ENCODE measurements at regions of chr10 and their contacts with region 1.

Region 1: GRCh38 chr10:70221030-70221429 is 12.2 kb downstream of the PPA1 start:
- DNase-seq: no peak
- ATAC-seq: no peak
- H3K4me3 Mint-ChIP-seq: peak overlapping the region in 2 of 10 donors; percentile 12 to 53
- H3K27ac Mint-ChIP-seq: peak overlapping the region in 2 of 10 donors; percentile 73 to 80
- H3K4me1 Mint-ChIP-seq: peaks cover 8 to 18% (median 14%) of the 10 kb centered on the region in 4 donors
- H3K27me3 Mint-ChIP-seq: no peaks in the 10 kb centered on the region

Region 2: DNA sequence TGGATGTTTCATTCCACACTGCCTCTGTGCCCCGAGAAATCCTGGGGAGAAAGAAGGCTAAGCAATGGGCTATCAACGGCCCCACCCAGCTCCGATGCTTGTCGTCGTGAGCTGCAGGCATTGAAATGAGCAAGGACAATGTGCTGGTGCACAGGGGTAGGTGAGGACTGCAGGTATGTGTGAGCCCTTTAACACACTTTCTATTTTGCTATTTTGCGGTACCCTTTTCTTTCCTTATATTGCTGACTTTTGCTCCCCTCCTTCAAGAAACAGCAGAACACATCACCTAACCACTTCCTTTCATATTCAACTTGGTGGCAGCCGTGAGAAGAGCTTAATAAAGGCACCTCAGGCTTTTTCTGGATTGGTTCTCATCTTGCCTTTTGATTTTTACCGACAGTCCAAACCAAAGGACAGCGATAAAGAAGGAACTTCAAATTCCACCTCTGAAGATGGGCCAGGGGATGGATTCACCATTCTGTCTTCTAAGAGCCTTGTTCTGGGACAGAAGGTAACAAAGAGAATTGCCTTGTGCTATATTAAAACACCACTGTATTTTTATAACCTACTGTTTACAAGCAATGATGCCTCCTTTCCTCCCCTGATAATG is 127.6 kb before region 1 on chr10:
- POLR2A ChIA-PET with region 1: no interaction called
- DNase-seq: peak in 4 of 10 donors; percentile 19 to 64 (median 48)
- ATAC-seq: peak; percentile 69 to 70
- H3K4me3 Mint-ChIP-seq: peak overlapping the region; percentile 78 to 97 (median 94)
- H3K27ac Mint-ChIP-seq: peak overlapping the region; percentile 95 to 99 (median 98)
- H3K4me1 Mint-ChIP-seq: peaks cover 20 to 69% (median 58%) of the 10 kb centered on the region in 4 donors
- H3K27me3 Mint-ChIP-seq: no peaks in the 10 kb centered on the region

Region 3: DNA sequence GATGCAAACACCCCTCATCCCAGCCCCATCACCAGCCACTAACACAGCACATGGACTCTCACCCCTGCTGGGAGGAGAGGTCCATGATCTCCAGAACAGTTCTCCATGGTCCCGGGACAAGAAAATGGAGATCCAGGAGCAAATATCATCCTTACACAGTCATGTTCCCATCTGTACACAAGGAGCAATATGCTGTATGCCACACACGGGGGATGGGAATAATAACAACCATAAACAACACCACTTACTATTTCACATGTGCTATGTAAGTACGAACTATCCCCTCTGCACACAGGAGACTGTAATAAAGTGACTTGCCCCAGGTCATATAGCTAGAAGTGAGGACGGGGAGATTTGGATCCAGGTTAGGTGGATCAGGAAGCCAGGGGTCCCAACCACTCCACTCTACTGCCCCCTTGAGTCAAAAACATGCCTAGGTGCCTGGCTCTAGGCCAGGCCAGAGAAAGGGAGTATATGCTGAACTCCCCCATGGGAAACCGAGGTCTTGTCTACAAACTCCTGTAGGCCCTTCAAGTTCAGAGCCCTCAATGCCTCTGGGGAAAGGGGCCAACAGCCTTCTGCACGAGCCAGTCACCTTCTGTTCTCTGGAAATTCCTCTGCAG is 127.3 kb after region 1 on chr10:
- POLR2A ChIA-PET with region 1: no interaction called
- DNase-seq: peak in 6 of 10 donors; percentile 16 to 47 (median 36)
- ATAC-seq: peak; percentile 54 to 61
- H3K4me3 Mint-ChIP-seq: no peak overlapping the region
- H3K27ac Mint-ChIP-seq: no peak overlapping the region
- H3K4me1 Mint-ChIP-seq: peaks cover 0 to 3% (median 0%) of the 10 kb centered on the region in 4 donors
- H3K27me3 Mint-ChIP-seq: no peaks in the 10 kb centered on the region

Region 4: DNA sequence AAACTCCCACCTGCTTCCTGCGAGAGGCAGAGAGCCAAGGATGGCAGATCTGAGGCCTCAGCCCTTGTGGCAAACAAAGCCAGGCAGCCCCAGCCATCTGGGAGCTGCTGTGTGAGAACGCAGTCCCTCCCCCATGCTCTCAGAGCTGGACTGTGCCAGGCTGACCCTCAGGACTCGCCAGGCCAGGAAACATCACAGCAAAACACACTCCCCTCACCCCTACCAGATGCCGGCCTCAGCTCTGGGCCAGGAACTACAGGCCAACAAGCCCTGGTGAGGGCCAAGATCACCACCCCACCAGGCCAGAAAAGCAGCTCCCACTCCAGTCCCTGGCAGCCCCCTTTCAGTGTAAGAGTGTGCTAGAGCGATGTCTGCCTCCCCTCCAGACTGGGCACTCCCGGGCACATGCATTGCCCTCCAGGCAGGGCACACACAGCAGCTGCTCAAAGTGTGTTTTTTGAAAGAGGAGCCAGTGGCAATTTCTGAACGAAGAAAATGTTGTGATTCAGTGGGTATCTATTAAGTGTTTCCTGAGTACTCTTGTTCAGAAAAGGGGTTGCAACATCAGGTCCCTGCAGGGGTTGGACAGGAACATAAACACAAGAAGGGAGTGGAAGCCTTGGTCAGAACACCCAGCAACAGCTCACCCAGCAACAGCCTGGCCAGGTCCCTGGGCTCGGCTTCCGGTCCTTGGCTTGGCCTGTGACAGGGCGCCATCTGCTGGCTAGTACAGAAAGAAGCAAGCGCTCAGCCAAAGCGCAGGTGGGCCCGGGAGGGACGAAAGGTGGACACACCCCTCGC is 143.1 kb after region 1 on chr10:
- POLR2A ChIA-PET with region 1: interaction called, 25 read pairs
- DNase-seq: peak; percentile 65 to 91 (median 82)
- ATAC-seq: peak; percentile 99 to 100
- H3K4me3 Mint-ChIP-seq: peak overlapping the region in 5 of 10 donors; percentile 2 to 64 (median 35)
- H3K27ac Mint-ChIP-seq: peak overlapping the region in 8 of 10 donors; percentile 11 to 69 (median 51)
- H3K4me1 Mint-ChIP-seq: peaks cover 3 to 15% (median 10%) of the 10 kb centered on the region in 4 donors
- H3K27me3 Mint-ChIP-seq: peaks cover 0 to 2% (median 0%) of the 10 kb centered on the region in 5 donors